A549 (cell line): ENCODE measurements at regions of chr14 and their contacts with region 1.

Region 1: DNA sequence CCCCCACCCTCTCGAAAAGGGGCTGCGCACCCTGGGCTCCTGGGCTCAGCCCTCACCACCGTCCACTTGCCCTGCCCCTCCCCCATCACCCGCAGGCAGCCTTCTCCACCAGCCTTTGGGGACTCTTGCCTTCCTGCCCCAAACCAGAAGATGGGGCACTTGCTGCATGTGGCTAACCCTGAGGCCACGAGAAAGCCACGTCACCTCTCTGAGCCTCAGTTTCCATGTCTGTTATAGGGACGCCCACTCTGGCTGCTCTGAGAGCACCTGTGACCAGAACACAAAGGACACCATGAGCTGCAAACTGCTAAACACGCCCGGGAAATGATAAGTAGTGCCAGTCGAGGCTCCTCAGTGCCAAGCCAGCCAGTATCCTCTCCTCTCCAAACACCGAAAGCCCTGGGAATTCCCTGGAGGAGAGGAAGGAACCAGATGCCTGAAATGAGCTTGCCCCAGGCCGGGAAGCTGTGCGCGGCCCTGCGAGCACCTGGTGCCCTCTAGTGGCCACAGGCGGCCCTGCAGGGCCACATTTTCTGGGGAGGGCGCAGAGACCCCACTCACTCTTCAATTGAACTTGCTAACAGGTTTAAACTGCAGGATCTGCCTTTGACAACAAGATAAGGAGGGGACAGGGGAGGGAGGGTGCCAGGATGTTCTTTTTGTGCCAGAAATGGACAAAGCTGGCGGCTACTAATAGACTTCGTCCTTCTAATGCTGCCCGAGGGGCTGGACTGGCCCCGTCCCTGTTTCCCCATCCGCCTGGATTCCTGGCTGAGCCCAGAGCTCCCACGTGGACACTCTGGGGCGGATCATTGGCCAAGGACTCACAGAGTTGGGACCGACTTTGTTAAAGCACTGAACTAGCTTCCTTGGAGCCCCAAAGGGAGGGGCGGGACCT is 10.2 kb upstream of the SERPINA9 start:
- DNase-seq: peak; percentile 37 to 63
- ATAC-seq: peak; percentile 80 to 91
- H3K4me3 ChIP-seq: no peak overlapping the region
- H3K27ac ChIP-seq: peak overlapping the region; percentile 37 to 40; a peak in 1 of 6 replicates
- H3K4me1 ChIP-seq: 0 out of 3 replicates have a peak, but pooled peaks cover 3% of the 10 kb centered on the region
- CTCF ChIP-seq: peak; percentile 96
- EP300 ChIP-seq: no peak
- POLR2A ChIP-seq: no peak
- RAD21 ChIP-seq: peak; percentile 79 to 87

Region 2: GRCh38 chr14:94129111-94129757 is 357.0 kb before region 1 on chr14 and contains the start of gene IFI27L2:
- CTCF ChIA-PET with region 1: interaction called, 10 read pairs
- POLR2A ChIA-PET with region 1: no interaction called
- DNase-seq: peak; percentile 79 to 90
- ATAC-seq: peak; percentile 95 to 96
- H3K4me3 ChIP-seq: peak within 1 kb of the TSS; percentile 49
- H3K27ac ChIP-seq: peak within 1 kb of the TSS; percentile 66 to 81
- H3K4me1 ChIP-seq: peaks cover 4% of the 10 kb centered on the region; the same call in 2 of the 3 replicates
- CTCF ChIP-seq: no peak
- EP300 ChIP-seq: no peak
- POLR2A ChIP-seq: peak; percentile 42
- RAD21 ChIP-seq: no peak
- polyA plus RNA-seq, gene IFI27L2: 20.3 and 26.9 TPM in 2 replicates

Region 3: DNA sequence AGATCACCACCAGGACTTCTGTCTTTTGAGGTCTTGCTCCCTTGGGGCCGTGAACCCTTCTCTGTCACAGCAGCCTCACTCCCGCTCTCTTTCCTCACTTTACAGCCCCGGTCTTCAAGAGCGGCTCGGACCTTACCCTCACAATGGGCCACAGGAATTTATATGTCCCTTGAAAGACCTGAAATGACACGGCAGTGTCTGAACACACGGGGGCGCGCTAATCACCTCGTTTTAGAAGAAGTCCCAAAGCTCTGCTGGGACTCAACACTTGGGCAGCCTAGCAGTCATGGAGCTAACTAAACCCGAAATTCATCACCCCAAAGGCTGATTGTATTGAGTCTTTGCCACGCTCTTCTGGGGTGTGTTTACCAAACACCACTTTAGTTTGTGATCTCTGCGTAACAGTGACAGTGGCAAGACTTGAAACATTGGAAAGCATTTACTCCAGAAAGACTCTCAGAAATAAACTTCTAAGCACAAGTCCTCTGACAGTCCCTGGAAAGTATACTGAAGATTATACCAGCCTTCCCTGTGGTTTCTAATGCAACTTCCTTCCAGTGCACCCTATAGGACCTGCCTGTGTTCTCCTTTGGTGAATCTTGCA is 62.6 kb before region 1 on chr14:
- CTCF ChIA-PET with region 1: interaction called, 19 read pairs
- POLR2A ChIA-PET with region 1: no interaction called
- DNase-seq: peak; percentile 61 to 75
- ATAC-seq: peak; percentile 87 to 95
- H3K4me3 ChIP-seq: no peak overlapping the region
- H3K27ac ChIP-seq: no peak overlapping the region
- H3K4me1 ChIP-seq: no peaks in the 10 kb centered on the region
- CTCF ChIP-seq: peak; percentile 65
- EP300 ChIP-seq: no peak
- POLR2A ChIP-seq: no peak
- RAD21 ChIP-seq: peak; percentile 61 to 70; a peak in 4 of 5 replicates

Region 4: DNA sequence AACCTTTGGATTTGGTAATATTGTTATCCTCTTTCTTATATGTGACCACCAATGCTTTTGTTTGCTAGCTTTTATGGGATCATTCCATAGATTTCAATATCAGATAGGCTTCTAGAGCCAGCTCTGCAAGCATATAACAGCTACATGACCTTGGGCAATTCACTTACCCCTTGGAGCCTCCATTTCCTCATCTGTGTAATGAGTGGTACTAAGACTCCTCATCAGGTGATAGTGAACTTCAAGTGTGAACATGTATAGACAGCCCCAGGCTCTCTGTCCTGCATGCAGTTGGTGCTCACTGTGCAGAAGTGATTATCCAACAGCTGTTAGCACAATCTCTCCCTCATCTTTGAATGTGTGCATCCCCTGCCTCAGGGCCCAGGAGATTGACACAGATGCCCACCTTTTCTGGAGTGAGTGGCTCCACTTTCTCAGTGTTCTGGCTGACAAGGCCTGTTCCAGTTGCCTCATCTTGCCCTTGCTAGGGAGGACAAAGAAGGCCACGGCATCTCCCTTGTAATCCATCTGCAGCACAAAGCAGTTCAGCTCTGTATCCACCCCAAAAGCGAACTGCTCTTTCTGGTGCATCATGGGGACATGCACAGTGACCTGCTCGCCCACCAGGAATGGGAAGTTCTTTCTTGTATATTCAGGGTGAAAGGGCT is 19.4 kb before region 1 on chr14:
- CTCF ChIA-PET with region 1: interaction called, 47 read pairs
- POLR2A ChIA-PET with region 1: no interaction called
- DNase-seq: no peak
- ATAC-seq: no peak
- H3K4me3 ChIP-seq: no peak overlapping the region
- H3K27ac ChIP-seq: no peak overlapping the region
- H3K4me1 ChIP-seq: peaks cover 12% of the 10 kb centered on the region; the same call in 2 of the 3 replicates
- CTCF ChIP-seq: no peak
- EP300 ChIP-seq: no peak
- POLR2A ChIP-seq: no peak
- RAD21 ChIP-seq: no peak

Region 5: GRCh38 chr14:94501588-94502516 is 15.7 kb after region 1 on chr14:
- CTCF ChIA-PET with region 1: interaction called, 15 read pairs
- POLR2A ChIA-PET with region 1: no interaction called
- DNase-seq: no peak
- ATAC-seq: no peak
- H3K4me3 ChIP-seq: no peak overlapping the region
- H3K27ac ChIP-seq: no peak overlapping the region
- H3K4me1 ChIP-seq: no peaks in the 10 kb centered on the region
- CTCF ChIP-seq: no peak
- EP300 ChIP-seq: no peak
- POLR2A ChIP-seq: no peak
- RAD21 ChIP-seq: no peak

Region 6: GRCh38 chr14:94681300-94682060 is 195.3 kb after region 1 on chr14:
- CTCF ChIA-PET with region 1: interaction called, 16 read pairs
- POLR2A ChIA-PET with region 1: no interaction called
- DNase-seq: peak; percentile 69 to 78
- ATAC-seq: peak; percentile 84 to 90
- H3K4me3 ChIP-seq: no peak overlapping the region
- H3K27ac ChIP-seq: peak overlapping the region in 1 of 2 experiments; percentile 42; a peak in 2 of 6 replicates
- H3K4me1 ChIP-seq: peaks cover 8% of the 10 kb centered on the region; the same call in 1 of the 3 replicates
- CTCF ChIP-seq: peak; percentile 81
- EP300 ChIP-seq: no peak
- POLR2A ChIP-seq: no peak
- RAD21 ChIP-seq: peak; percentile 86 to 91

Region 7: DNA sequence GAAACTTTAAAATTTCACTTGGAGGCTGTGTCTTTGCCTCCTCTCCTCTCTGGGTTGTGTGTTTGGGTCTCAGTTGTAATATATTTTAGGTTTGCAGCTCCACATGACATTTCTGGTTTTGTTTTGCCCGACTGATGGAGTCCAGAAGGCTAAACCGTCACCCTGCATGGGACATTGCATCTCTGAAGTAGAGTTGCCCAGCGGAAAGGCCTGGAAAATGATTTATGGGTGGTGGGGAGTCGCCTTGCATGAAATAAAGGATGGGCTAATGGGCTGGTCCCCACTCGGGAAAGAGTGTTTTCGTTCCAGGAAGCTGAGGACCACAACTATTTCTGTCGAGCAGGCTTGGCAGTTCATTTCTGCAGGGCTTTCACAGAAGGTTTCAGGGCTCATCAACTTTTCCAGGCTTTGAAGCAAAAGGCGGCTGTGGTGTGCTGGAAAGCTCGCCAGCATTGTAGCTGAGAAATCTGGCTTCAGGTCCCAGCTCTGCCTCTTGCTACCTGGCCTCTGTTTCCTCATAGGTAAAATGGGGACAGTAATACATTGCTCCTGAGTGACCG is 358.5 kb after region 1 on chr14:
- CTCF ChIA-PET with region 1: no interaction called
- POLR2A ChIA-PET with region 1: no interaction called
- DNase-seq: no peak
- ATAC-seq: no peak
- H3K4me3 ChIP-seq: no peak overlapping the region
- H3K27ac ChIP-seq: no peak overlapping the region
- H3K4me1 ChIP-seq: no peaks in the 10 kb centered on the region
- CTCF ChIP-seq: no peak
- EP300 ChIP-seq: no peak
- POLR2A ChIP-seq: no peak
- RAD21 ChIP-seq: no peak